ENCODE measurements at regions of chr14 and their contacts with region 1.

Region 1: DNA sequence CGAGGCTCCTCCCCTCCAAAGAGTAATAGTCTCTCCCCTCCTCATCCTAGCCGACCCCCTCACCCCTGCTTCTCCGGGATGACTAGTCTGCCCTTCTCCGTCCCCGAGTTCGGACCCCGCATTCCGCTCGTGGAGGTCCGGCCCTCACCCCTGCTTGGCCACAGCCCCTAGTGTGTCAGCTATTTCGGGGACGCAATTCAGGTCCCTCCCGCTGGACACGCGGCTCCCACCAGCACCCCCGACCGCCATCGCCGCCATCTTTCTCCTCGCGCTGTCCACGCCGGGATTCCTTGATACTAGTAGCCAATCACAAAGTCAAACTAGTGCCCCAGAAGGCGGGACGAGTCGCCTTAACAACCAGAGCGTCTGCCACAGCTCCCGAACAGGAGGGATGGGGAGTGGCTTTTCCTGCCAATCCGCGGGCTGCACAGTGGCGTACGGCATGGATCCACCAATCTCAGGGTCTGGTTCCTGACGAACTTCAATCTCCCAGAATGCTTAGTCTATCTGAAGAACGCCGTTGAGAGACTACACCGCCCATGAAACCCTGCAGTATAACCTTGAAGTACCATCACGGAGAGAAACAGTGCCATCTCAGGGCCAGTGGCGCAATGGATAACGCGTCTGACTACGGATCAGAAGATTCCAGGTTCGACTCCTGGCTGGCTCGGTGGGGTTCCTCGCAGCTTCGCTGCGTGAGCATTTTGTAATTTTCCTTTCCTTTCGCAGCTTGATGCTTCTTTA is at the start of gene PRMT5:
- DNase-seq: peak; percentile 98
- ATAC-seq: peak; percentile 98
- H3K4me3 Mint-ChIP-seq: no peak within 1 kb of the TSS
- H3K27ac Mint-ChIP-seq: no peak within 1 kb of the TSS
- H3K4me1 Mint-ChIP-seq: peaks cover 27% of the 10 kb centered on the region
- H3K27me3 Mint-ChIP-seq: no peaks in the 10 kb centered on the region
- total RNA-seq, gene PRMT5: 55.5 to 64.9 TPM

Region 2: DNA sequence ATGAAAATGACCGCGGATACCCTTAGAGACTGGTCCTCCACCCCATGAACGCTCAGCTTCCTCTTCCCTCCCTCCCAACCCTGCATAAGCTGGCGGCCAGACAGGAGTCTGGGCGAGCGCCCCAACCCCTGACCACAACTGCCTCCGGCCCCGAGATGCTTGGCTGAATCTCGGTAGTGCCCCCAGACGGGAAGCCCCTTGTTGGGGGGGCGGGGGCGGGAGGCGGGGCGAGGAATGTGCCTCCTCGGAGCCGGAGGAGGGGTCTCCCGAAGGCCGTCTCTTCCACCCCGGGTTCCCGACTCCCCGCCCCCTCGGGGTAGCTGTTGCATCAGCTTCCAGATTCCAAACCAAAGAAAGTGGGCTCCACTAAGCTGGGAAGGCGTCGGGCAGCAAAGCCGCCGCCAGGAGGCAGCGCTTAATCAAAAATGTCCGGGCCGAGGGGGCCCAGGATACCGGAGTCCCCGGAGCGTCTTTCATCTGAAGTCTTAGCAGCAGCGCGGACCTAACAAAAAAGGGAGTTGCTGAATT is 106.6 kb before region 1 on chr14:
- CTCF ChIA-PET with region 1: interaction called, 12 read pairs
- POLR2A ChIA-PET with region 1: no interaction called
- DNase-seq: peak; percentile 79
- ATAC-seq: peak; percentile 89
- H3K4me3 Mint-ChIP-seq: peak overlapping the region; percentile 39
- H3K27ac Mint-ChIP-seq: no peak overlapping the region
- H3K4me1 Mint-ChIP-seq: peaks cover 32% of the 10 kb centered on the region
- H3K27me3 Mint-ChIP-seq: peaks cover 24% of the 10 kb centered on the region

Region 3: DNA sequence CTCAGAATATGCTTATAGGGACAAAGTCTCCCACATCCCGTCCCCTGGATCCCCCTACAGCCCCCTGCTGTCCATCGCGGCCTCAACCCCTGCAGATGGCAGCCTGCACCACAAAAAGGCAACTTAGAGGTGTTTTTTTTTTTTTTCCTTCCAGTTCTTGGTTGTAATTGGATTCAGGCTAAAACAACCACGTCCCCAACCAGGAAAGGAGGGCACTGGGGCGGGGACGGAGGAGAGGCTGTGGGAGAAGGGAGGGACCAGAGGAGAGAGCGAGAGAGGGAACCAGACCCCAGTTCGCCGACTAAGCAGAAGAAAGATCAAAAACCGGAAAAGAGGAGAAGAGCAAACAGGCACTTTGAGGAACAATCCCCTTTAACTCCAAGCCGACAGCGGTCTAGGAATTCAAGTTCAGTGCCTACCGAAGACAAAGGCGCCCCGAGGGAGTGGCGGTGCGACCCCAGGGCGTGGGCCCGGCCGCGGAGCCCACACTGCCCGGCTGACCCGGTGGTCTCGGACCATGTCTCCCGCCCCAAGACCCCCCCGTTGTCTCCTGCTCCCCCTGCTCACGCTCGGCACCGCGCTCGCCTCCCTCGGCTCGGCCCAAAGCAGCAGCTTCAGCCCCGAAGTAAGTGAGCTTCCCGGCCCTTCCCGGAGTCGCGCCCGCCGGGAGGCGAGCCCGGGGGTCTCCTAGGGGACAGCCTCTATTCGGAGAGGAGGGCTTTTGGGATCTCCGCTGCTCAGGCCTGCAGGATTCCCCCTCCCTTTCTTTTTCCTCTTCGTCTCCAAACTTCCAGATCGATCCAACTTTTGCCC is 92.8 kb before region 1 on chr14 and contains the start of gene MMP14:
- CTCF ChIA-PET with region 1: no interaction called
- POLR2A ChIA-PET with region 1: no interaction called
- DNase-seq: no peak
- ATAC-seq: no peak
- H3K4me3 Mint-ChIP-seq: no peak within 1 kb of the TSS
- H3K27ac Mint-ChIP-seq: no peak within 1 kb of the TSS
- H3K4me1 Mint-ChIP-seq: peaks cover 30% of the 10 kb centered on the region
- H3K27me3 Mint-ChIP-seq: peaks cover 10% of the 10 kb centered on the region
- total RNA-seq, gene MMP14: 1.8 to 2.4 TPM

Region 4: DNA sequence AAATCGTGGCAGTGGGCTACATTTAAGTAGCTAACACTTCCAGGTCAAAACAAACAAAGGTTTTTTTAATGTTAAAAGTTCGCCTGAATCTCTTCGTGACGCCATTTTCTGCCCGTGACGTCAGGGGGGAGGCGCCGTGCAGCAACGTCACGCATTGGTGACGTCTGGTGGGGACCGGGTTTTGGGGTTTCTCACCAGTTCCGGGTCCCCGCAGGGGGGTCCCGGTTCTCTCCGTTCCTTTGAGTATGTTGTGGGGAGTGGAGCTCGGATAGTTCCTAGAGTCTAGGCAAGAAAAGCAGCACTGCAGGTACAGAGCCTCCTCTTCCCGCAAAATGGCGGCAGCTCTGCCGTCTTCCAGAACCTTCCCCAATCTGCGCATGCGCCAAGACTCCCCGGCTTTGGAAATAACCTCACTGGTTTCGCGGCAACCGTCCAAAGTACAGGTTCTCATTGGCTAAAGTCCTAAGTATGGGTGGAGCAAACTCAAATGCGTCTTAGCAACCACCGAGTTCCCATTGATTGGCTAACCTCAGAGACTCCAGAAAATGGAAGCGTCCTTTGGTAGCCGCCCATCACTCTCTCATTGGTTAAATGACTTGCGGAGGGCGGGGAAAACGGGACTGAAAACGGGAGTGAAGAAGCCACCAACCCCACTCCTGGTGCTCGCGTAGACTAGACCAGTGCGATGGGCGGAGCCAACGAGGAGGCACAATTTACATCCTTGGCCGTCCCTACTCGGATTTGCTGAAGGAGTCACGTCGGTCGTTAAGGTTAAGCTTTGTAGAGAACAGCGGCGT is 10.3 kb before region 1 on chr14 and contains the start of gene RBM23:
- CTCF ChIA-PET with region 1: interaction called, 84 read pairs
- POLR2A ChIA-PET with region 1: interaction called, 30 read pairs
- DNase-seq: peak; percentile 100
- ATAC-seq: peak; percentile 96
- H3K4me3 Mint-ChIP-seq: peak within 1 kb of the TSS; percentile 88
- H3K27ac Mint-ChIP-seq: peak within 1 kb of the TSS; percentile 98
- H3K4me1 Mint-ChIP-seq: peaks cover 35% of the 10 kb centered on the region
- H3K27me3 Mint-ChIP-seq: no peaks in the 10 kb centered on the region
- total RNA-seq, gene RBM23: 77.1 to 81.2 TPM

Region 5: GRCh38 chr14:22945642-22946041 is 16.4 kb after region 1 on chr14:
- CTCF ChIA-PET with region 1: interaction called, 30 read pairs
- POLR2A ChIA-PET with region 1: interaction called, 3 read pairs
- DNase-seq: no peak
- ATAC-seq: no peak
- H3K4me3 Mint-ChIP-seq: no peak overlapping the region
- H3K27ac Mint-ChIP-seq: no peak overlapping the region
- H3K4me1 Mint-ChIP-seq: no peaks in the 10 kb centered on the region
- H3K27me3 Mint-ChIP-seq: no peaks in the 10 kb centered on the region

Region 6: GRCh38 chr14:22973217-22974032 is 44.1 kb after region 1 on chr14:
- CTCF ChIA-PET with region 1: interaction called, 29 read pairs
- POLR2A ChIA-PET with region 1: no interaction called
- DNase-seq: peak; percentile 55
- ATAC-seq: no peak
- H3K4me3 Mint-ChIP-seq: no peak overlapping the region
- H3K27ac Mint-ChIP-seq: no peak overlapping the region
- H3K4me1 Mint-ChIP-seq: no peaks in the 10 kb centered on the region
- H3K27me3 Mint-ChIP-seq: peaks cover 7% of the 10 kb centered on the region

Region 7: DNA sequence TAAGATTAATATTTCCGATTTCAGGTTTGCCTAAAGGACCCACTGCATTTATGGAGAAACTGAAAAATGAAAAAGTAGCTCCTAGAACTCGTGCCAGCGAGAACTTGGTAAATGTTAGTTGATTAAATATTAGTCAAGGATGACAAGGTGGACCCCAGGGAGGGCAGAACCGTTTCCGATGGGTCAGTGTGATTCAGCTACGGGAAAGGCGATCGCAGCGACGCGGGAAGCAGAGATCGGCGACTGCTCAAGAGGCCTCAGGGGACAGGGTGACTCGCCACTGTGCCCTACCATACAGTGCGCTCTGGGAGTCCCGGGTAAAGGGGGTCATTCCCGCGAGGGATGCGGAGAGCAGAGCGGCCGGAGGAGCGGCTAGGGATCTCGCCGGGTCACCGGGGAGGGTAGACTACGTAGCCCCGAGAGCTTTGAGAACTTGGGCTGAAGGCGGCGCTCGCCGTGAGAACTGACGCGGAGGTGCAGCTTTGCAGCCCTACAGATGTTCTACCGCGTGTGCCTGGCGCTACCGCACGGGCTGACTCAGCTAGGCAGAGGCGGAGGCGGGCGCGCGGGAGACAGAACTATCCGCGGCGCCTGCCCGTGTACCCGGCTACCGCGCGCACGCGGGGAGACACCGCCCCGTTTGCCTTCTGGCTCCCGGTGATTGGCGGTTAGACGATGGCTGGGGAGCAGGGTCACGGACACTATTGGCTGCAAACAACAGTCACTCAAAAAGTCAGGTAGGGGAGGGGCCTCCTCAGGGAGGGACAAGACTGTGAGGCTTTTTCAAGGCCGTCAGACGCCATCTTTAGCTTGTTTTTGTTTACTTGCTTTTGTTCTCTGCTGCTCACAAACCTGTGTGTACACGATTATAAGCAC is 77.5 kb after region 1 on chr14:
- CTCF ChIA-PET with region 1: interaction called, 26 read pairs
- POLR2A ChIA-PET with region 1: interaction called, 4 read pairs
- DNase-seq: peak; percentile 98
- ATAC-seq: peak; percentile 99
- H3K4me3 Mint-ChIP-seq: peak overlapping the region; percentile 94
- H3K27ac Mint-ChIP-seq: peak overlapping the region; percentile 98
- H3K4me1 Mint-ChIP-seq: peaks cover 51% of the 10 kb centered on the region
- H3K27me3 Mint-ChIP-seq: no peaks in the 10 kb centered on the region

Region 8: GRCh38 chr14:23095196-23096108 is 166.2 kb after region 1 on chr14 and contains the start of gene C14orf119:
- CTCF ChIA-PET with region 1: interaction called, 15 read pairs
- POLR2A ChIA-PET with region 1: no interaction called
- DNase-seq: peak; percentile 100
- ATAC-seq: peak; percentile 94
- H3K4me3 Mint-ChIP-seq: no peak within 1 kb of the TSS
- H3K27ac Mint-ChIP-seq: no peak within 1 kb of the TSS
- H3K4me1 Mint-ChIP-seq: peaks cover 33% of the 10 kb centered on the region
- H3K27me3 Mint-ChIP-seq: no peaks in the 10 kb centered on the region
- total RNA-seq, gene C14orf119: 46.0 to 47.0 TPM

Region 9: DNA sequence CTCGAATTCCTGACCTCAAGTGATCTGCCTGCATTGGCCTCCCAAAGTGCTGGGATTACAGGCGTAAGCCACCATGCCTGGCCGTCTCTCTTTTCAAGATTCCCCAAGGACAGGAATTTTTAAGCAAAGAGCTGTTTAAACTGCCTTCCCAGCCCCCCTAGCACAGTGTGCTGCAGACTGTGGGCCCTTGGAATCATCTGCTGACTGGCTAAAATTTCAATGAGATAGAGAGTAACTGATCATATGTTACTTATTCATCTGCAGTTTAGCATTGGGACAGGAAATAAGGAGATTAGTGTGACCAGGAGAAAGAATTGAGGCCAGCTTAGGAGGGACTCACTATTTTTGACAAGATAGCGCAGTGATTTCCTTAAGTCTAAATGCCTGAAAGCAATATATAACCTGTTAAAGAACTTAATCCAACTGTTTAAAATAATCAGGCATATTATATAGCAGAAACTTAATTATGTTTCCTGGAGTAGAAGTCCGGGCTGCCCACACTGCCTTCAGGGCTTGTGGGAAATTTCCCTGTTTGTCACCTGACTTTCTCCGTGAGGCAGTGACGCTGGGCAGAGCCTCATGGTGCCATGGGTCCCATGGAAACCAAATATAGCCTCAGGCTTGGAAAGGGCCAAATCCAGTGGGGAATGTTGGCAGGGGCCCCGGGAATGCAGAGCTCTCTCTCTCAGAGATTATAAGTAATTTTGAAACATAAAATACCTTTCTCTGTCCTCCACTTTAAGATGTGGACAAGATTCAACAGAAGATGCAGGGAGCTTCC is 212.6 kb after region 1 on chr14:
- CTCF ChIA-PET with region 1: no interaction called
- POLR2A ChIA-PET with region 1: no interaction called
- DNase-seq: no peak
- ATAC-seq: no peak
- H3K4me3 Mint-ChIP-seq: no peak overlapping the region
- H3K27ac Mint-ChIP-seq: no peak overlapping the region
- H3K4me1 Mint-ChIP-seq: no peaks in the 10 kb centered on the region
- H3K27me3 Mint-ChIP-seq: peaks cover 3% of the 10 kb centered on the region

Measured in activated CD8-positive, alpha-beta T cell treated with anti-CD3 and anti-CD28 coated beads, Interleukin-2, amount 10 ng/mL, durations not matched to agents 7 days and 5 days (primary cell).